Breast epithelium (tissue), 4 donors: ENCODE measurements at regions of chr6 and their contacts with region 1.

Region 1: GRCh38 chr6:9961668-9962067 is 453.2 kb downstream of the TFAP2A start:
- DNase-seq: no peak
- H3K4me3 ChIP-seq: no peak overlapping the region
- H3K27ac ChIP-seq: no peak overlapping the region
- H3K4me1 ChIP-seq: no peaks in the 10 kb centered on the region
- H3K27me3 ChIP-seq: no peaks in the 10 kb centered on the region
- CTCF ChIP-seq: no peak
- POLR2A ChIP-seq: no peak

Region 2: DNA sequence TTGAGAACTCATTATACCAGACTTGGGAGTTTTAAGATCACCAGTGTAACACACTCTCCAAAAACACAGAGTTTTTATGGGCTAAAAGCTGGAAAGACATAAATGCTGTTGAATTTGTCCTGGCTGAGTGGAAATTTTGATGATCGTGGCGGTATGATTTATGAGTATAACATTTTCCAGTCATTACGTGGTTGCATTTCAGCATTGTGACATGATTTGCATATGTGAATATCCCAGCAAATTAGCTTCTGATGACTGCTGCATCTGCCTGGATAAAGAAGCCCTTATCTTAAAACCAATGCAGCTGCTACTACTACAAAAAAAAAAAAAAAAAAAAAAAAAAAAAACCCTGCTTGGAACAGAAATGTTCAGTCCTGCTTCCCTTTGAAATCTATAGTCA is 397.6 kb before region 1 on chr6:
- intact Hi-C with region 1: no loop called
- DNase-seq: no peak
- H3K4me3 ChIP-seq: no peak overlapping the region
- H3K27ac ChIP-seq: no peak overlapping the region
- H3K4me1 ChIP-seq: no peaks in the 10 kb centered on the region
- H3K27me3 ChIP-seq: no peaks in the 10 kb centered on the region
- CTCF ChIP-seq: no peak
- POLR2A ChIP-seq: no peak

Region 3: GRCh38 chr6:9933674-9934073 is 28.0 kb before region 1 on chr6:
- intact Hi-C with region 1: no loop called
- DNase-seq: no peak
- H3K4me3 ChIP-seq: no peak overlapping the region
- H3K27ac ChIP-seq: no peak overlapping the region
- H3K4me1 ChIP-seq: no peaks in the 10 kb centered on the region
- H3K27me3 ChIP-seq: no peaks in the 10 kb centered on the region
- CTCF ChIP-seq: no peak
- POLR2A ChIP-seq: no peak

Region 4: GRCh38 chr6:9943986-9944385 is 17.7 kb before region 1 on chr6:
- intact Hi-C with region 1: no loop called
- DNase-seq: no peak
- H3K4me3 ChIP-seq: no peak overlapping the region
- H3K27ac ChIP-seq: no peak overlapping the region
- H3K4me1 ChIP-seq: no peaks in the 10 kb centered on the region
- H3K27me3 ChIP-seq: no peaks in the 10 kb centered on the region
- CTCF ChIP-seq: no peak
- POLR2A ChIP-seq: no peak

Region 5: GRCh38 chr6:10030942-10031537 is 69.4 kb after region 1 on chr6:
- intact Hi-C with region 1: loop called (anchors 5 kb)
- DNase-seq: no peak
- H3K4me3 ChIP-seq: no peak overlapping the region
- H3K27ac ChIP-seq: no peak overlapping the region
- H3K4me1 ChIP-seq: no peaks in the 10 kb centered on the region
- H3K27me3 ChIP-seq: no peaks in the 10 kb centered on the region
- CTCF ChIP-seq: peak; percentile 23 to 39 (median 32)
- POLR2A ChIP-seq: no peak